Esophagus muscularis mucosa (tissue), 4 donors: ENCODE measurements at regions of chr1 and their contacts with region 1.

Region 1: DNA sequence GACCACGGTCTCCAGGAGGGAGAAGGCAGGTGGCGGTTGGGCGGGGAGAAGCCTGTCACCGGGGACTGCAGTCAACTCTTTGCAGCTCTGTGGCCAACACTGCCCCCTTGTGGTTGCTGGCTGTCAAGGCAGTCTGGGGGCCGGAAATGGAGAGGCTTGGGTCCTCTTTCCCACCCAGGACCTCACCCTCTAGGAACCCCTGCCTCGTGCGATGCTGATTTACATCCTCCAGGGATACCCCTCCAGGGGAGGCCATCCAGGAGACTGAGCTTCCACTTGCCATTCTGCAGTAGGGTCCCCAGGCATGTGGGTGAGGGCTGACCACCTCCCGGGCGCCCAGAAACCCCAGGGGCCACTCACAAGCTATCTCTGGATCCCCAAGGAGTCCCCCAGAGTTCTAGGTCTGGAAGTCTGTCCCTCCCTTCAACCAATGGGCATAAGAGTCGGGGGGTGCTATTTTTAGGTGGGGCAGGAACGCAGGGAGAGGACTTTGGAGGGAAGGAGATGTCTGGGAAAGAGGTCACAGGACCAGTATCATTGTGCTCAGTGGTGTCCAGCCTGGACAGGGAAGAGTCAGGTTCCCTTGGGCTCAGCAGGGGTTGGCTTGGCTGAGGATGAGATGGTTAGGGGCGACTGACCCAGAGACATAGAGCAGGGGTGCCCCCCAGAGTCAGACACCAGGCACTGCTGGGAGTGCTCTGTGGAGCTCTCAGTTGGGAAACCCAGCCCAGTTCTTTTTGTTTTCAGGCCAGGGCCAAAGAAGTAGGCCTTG is 7.1 kb upstream of the GPR61 start:
- DNase-seq: no peak
- H3K4me3 ChIP-seq: peak overlapping the region; percentile 7 to 43 (median 20)
- H3K27ac ChIP-seq: peak overlapping the region; percentile 7 to 65 (median 56)
- H3K4me1 ChIP-seq: peaks cover 32 to 47% (median 32%) of the 10 kb centered on the region in 4 donors
- H3K27me3 ChIP-seq: no peaks in the 10 kb centered on the region
- CTCF ChIP-seq: peak; percentile 47 to 99 (median 98)
- EP300 ChIP-seq: no peak
- POLR2A ChIP-seq: no peak

Region 2: DNA sequence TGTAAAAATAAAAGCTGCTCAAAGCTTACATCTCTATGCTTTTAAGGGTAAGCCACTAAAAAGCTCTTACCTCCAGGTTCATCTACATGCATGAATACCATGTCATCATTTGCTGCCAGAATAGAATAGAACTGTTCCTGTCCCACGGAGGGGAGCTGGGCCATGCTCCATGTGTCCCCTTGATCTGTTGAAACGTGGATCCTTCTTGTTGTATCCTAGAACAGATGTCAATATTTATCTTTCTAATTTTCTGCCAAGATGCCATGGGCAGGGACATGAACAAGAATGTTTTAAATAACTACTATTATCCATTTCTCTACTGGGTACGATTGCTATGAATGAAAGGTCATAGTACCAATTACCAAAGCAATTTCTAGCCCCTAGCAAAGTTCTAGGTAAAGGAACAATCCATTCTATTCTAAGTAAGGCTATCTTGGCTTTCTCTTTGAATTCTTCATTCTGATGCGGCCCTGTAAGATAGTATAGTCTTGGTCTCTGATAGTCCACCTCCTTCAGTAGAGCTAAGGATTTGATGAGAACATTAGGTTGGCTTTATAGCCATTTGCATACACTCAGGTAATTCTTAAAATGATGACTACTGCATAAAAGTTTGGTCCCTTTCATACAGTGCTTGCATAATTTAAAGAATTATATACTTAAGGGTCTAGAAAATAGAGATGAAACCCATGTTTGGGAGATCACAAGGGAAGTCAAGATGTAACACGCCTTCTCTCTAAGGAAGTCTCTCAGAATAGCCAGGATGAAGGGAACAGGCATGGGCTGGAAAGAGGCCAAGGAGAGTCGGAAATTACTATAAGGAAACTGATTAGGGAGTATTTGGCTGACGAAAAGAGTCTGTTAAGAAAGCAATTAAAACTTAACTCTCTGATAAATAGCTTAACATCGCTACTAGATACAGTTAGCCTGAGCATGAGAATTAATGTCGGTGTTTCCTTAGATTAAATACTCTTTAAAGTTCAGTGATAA is 190.3 kb before region 1 on chr1:
- intact Hi-C with region 1: no loop called
- DNase-seq: peak; percentile 68
- H3K4me3 ChIP-seq: no peak overlapping the region
- H3K27ac ChIP-seq: no peak overlapping the region
- H3K4me1 ChIP-seq: peaks cover 0 to 4% (median 0%) of the 10 kb centered on the region in 4 donors
- H3K27me3 ChIP-seq: no peaks in the 10 kb centered on the region
- CTCF ChIP-seq: no peak
- EP300 ChIP-seq: no peak
- POLR2A ChIP-seq: no peak

Region 3: DNA sequence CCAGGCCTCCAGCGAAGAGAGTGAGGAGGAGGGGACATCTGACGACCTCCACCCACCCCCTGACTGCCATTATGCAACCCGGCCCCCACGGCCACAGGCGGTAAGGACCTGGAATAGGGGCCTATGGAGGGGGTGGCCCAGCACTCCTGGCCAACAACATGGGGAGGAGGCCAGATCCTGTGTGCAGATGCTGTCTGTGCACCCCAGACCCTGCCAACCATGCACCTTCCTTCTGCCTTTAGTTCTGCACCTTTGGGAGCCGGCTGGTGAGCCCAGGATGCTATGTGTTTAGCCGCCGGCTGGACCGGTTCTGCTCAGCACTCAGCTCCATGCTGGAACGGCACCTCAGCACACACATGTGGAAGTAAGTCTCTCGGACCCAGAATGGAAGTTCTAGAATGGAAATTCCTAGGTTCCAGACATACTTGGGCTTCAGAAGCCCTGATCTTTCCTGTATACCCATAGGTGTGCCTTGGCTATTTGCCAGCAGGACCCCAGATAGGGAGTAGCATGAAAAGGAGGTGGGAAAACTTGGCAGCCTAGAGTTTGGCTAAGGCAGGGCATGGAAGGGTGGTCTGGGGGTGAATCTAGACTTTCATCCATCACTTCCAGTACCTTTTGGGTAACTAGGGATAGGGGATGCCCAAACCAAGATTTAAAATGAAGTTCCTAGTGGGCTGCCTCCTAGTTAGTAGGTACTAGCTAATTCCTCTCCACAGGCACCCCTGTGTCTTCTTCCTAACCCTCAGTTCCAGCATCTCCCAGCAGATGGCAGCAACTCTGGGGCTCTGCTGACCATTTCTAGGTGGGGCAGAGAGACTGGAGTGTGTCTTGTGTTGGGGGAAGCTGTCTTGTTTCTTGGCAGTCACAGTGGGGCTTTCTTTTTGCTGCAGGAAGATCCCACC is 42.3 kb before region 1 on chr1:
- intact Hi-C with region 1: loop called (anchors 2 kb)
- DNase-seq: no peak
- H3K4me3 ChIP-seq: no peak overlapping the region
- H3K27ac ChIP-seq: no peak overlapping the region
- H3K4me1 ChIP-seq: peaks cover 22 to 35% (median 27%) of the 10 kb centered on the region in 4 donors
- H3K27me3 ChIP-seq: no peaks in the 10 kb centered on the region
- CTCF ChIP-seq: peak; percentile 77 to 90 (median 77)
- EP300 ChIP-seq: no peak
- POLR2A ChIP-seq: no peak

Region 4: DNA sequence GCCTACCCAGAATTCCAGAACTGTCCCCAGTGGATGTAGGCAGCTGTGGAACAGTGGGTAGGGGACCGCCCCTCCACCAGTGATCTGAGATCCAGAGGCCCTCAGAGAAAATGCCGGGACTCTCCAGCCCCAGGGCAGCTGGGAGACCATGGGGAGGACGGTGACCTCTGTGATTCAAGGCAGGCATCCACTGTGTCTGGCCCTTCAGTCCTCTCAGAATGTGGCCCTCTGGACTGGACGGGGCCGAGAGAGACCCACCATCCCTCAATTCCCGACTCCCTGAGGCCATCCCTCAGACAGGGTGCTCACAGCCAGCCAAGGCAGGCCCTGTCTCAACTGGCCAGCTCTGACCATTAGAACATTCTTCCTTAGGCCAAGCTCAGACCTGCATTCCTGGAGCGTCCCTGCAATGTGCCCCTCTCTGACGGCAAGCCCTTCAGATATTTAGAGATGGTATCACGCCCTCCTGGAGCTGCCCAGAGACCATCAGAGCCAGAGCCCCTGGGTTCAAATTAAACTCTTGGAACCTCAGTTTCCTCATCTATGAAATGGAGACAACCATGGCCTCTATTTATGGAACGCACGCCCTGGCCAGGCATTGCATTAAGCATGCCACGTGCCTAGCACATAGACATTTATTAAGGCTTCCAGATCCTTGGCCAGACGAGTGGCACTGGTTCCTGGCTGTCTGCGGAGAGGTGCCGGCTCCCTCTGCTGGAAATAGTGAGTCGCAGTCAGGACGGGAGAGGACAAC is 240.8 kb after region 1 on chr1:
- intact Hi-C with region 1: no loop called
- DNase-seq: peak; percentile 94
- H3K4me3 ChIP-seq: no peak overlapping the region
- H3K27ac ChIP-seq: no peak overlapping the region
- H3K4me1 ChIP-seq: peaks cover 7 to 21% (median 16%) of the 10 kb centered on the region in 4 donors
- H3K27me3 ChIP-seq: no peaks in the 10 kb centered on the region
- CTCF ChIP-seq: peak; percentile 86 to 92 (median 89)
- EP300 ChIP-seq: no peak
- POLR2A ChIP-seq: no peak